K562 (cell line): ENCODE measurements at regions of chr1 and their contacts with region 1.

Region 1: DNA sequence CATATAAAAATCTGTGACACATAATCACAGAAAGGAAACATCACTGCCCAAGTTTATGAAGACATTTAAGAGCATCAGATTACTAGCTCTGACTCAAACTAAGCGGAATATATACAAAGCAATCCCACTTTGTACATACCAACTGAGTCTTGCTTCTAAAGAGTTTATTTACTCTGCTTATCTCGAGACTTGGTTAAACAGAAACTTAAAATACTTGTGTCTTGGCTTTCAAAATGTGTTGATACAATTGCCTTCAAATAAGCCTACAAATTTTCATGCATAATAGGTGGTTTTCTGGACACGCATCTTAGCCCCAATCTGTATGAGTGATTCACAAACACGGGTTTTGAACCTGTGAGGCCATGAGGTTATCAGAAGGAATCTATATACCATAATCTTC is 21.0 kb downstream of the CD160 start:
- DNase-seq: no peak
- ATAC-seq: no peak
- H3K4me3 ChIP-seq: no peak overlapping the region
- H3K27ac ChIP-seq: no peak overlapping the region
- H3K4me1 ChIP-seq: no peaks in the 10 kb centered on the region
- H3K27me3 ChIP-seq: no peaks in the 10 kb centered on the region
- CTCF ChIP-seq: no peak
- EP300 ChIP-seq: no peak
- POLR2A ChIP-seq: no peak
- RAD21 ChIP-seq: no peak

Region 2: GRCh38 chr1:145690624-145691035 is 49.6 kb before region 1 on chr1:
- CTCF ChIA-PET with region 1: no interaction called
- POLR2A ChIA-PET with region 1: no interaction called
- in situ Hi-C with region 1: no loop called
- intact Hi-C with region 1: no loop called
- DNase-seq: no peak
- ATAC-seq: peak; percentile 35; the same call in 2 of the 3 replicates
- H3K4me3 ChIP-seq: no peak overlapping the region
- H3K27ac ChIP-seq: no peak overlapping the region
- H3K4me1 ChIP-seq: no peaks in the 10 kb centered on the region; a peak in 1 of 5 replicates
- H3K27me3 ChIP-seq: no peaks in the 10 kb centered on the region
- CTCF ChIP-seq: no peak
- EP300 ChIP-seq: no peak
- POLR2A ChIP-seq: no peak
- RAD21 ChIP-seq: no peak

Region 3: GRCh38 chr1:145823565-145824498 is 83.6 kb after region 1 on chr1 and contains the starts of genes POLR3C and RNF115:
- CTCF ChIA-PET with region 1: no interaction called
- POLR2A ChIA-PET with region 1: no interaction called
- in situ Hi-C with region 1: no loop called
- intact Hi-C with region 1: loop called (anchors 10 kb)
- DNase-seq: peak; percentile 87 to 93 (median 87)
- ATAC-seq: peak; percentile 93
- H3K4me3 ChIP-seq: peak within 1 kb of the TSS; percentile 77
- H3K27ac ChIP-seq: peak within 1 kb of the TSS; percentile 92
- H3K4me1 ChIP-seq: peaks cover 8 to 20% of the 10 kb centered on the region in 2 experiments
- H3K27me3 ChIP-seq: no peaks in the 10 kb centered on the region
- CTCF ChIP-seq: no peak
- EP300 ChIP-seq: no peak
- POLR2A ChIP-seq: peak; percentile 90
- RAD21 ChIP-seq: no peak
- polyA plus RNA-seq, gene POLR3C: 19.7 to 49.9 TPM
- polyA plus RNA-seq, gene RNF115: 1.9 to 2.0 TPM

Region 4: DNA sequence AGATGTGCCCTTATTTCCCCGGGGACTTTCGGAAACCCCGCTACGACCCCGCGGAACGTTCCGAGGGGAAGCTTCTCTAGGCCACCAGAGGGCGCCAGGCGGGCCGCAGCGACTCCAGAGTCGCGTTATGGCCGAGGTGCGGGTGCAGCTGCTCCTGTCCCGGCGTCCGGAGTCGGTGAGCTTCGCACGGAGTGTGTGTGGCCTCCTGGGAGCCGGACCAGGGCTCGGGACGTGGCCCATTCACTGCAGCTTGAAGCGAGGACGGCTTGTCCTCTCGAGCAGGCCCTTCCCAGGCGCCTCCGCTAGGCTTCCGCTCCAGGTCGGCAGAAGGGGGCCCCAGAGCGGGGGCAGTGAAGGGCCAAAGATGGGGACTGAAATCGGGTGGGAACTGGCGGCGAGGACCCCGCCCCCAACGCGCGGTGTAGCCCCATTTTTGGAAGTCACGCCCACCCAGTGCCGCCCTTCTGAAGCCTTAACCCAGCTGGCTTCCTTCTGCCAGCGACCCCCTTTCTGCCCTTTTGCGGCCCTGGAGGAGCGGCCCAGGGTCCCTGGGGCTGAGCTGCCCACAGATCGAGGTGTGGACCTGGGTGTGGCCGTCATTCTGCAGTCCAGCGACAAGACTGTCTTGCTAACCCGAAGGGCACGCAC is 105.4 kb after region 1 on chr1 and contains the start of gene NUDT17:
- CTCF ChIA-PET with region 1: no interaction called
- POLR2A ChIA-PET with region 1: no interaction called
- in situ Hi-C with region 1: no loop called
- intact Hi-C with region 1: no loop called
- DNase-seq: peak; percentile 82 to 89 (median 86)
- ATAC-seq: peak; percentile 89
- H3K4me3 ChIP-seq: peak within 1 kb of the TSS; percentile 54
- H3K27ac ChIP-seq: peak within 1 kb of the TSS; percentile 59
- H3K4me1 ChIP-seq: peaks cover 7 to 20% of the 10 kb centered on the region in 2 experiments; a peak in 4 of 5 replicates
- H3K27me3 ChIP-seq: no peaks in the 10 kb centered on the region
- CTCF ChIP-seq: peak; percentile 85 to 96 (median 92)
- EP300 ChIP-seq: no peak
- POLR2A ChIP-seq: peak; percentile 75
- RAD21 ChIP-seq: peak; percentile 71 to 77
- polyA plus RNA-seq, gene NUDT17: 2.1 to 3.1 TPM